PC-9 (cell line): ENCODE measurements at regions of chr12 and their contacts with region 1.

Region 1: DNA sequence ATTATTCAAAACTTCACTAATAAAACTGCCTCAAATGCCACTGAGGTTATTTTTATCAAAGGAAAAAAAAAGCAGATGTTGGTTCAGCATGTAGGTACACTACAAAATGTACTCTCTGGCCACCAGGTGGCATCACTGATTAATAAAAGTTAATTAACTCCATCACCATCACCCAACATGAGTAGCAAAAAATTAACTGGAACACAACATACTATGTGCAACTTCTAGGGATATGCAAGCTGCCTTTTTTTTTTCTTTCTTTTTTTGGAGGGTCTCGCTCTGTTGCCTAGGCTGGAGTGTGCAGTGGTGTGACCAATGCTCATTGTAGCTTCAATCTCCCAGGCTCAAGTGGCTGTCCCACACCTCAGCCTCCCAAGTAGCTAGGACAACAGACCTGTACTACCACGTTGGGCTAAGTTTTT is 43.8 kb upstream of the NR2C1 start:
- DNase-seq: peak in 1 of 2 experiments; percentile 48
- H3K4me3 ChIP-seq: peak overlapping the region; percentile 43; the same call in 1 of the 2 replicates
- H3K27ac ChIP-seq: peak overlapping the region; percentile 92
- H3K4me1 ChIP-seq: peaks cover 43% of the 10 kb centered on the region
- H3K27me3 ChIP-seq: no peaks in the 10 kb centered on the region
- CTCF ChIP-seq: peak; percentile 94

Region 2: GRCh38 chr12:95072900-95073697 is 44.1 kb before region 1 on chr12 and contains the start of gene NR2C1:
- CTCF ChIA-PET with region 1: no interaction called
- POLR2A ChIA-PET with region 1: no interaction called
- intact Hi-C with region 1: loop called (anchors 5 kb)
- DNase-seq: peak; percentile 80 to 87
- H3K4me3 ChIP-seq: peak within 1 kb of the TSS; percentile 80
- H3K27ac ChIP-seq: peak within 1 kb of the TSS; percentile 68
- H3K4me1 ChIP-seq: peaks cover 6% of the 10 kb centered on the region
- H3K27me3 ChIP-seq: no peaks in the 10 kb centered on the region
- CTCF ChIP-seq: no peak
- total RNA-seq, gene NR2C1: 24.2 and 26.4 TPM in 2 replicates

Region 3: DNA sequence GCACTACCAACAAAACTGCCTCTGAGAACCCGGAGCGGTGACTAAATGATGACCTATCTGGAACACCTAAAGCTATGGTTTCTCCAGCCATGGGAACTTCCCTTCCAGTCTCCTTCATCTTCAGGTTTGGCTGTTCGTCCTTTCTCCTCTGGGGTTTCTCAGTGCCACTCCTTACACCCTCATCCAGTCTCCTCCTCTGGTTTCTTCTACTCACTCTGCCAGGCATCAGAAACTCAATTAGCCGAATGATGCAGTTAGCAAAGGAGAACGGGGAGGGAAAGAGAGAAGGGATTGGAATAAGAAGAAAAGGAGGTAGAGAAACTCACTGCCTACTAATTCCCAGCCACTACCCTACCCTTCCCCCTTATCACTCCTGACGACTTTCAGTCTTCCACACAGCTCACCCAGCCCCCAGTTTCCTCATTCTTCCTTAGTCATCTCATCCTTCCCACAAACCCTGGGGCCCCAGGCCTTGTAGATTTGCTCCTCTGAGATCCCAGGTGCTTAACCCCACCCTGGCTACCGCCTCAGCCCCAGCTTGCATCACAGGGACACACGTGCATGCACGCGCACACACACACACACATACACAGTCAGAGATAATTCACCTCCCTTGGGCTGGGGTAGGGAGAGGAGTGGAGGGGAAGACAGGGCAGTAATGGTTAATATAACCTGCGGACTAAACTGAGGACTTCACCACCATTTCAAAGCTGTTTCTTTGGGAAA is 87.1 kb after region 1 on chr12:
- CTCF ChIA-PET with region 1: no interaction called
- POLR2A ChIA-PET with region 1: interaction called, 4 read pairs
- intact Hi-C with region 1: loop called (anchors 5 kb)
- DNase-seq: peak; percentile 91 to 98
- H3K4me3 ChIP-seq: peak overlapping the region; percentile 48
- H3K27ac ChIP-seq: peak overlapping the region; percentile 98
- H3K4me1 ChIP-seq: peaks cover 80% of the 10 kb centered on the region
- H3K27me3 ChIP-seq: no peaks in the 10 kb centered on the region
- CTCF ChIP-seq: no peak

Region 4: GRCh38 chr12:95336390-95337067 is 219.3 kb after region 1 on chr12:
- CTCF ChIA-PET with region 1: interaction called, 4 read pairs
- POLR2A ChIA-PET with region 1: no interaction called
- intact Hi-C with region 1: loop called (anchors 5 kb)
- DNase-seq: peak; percentile 26 to 61
- H3K4me3 ChIP-seq: no peak overlapping the region
- H3K27ac ChIP-seq: no peak overlapping the region
- H3K4me1 ChIP-seq: peaks cover 8% of the 10 kb centered on the region
- H3K27me3 ChIP-seq: no peaks in the 10 kb centered on the region
- CTCF ChIP-seq: peak; percentile 68

Region 5: DNA sequence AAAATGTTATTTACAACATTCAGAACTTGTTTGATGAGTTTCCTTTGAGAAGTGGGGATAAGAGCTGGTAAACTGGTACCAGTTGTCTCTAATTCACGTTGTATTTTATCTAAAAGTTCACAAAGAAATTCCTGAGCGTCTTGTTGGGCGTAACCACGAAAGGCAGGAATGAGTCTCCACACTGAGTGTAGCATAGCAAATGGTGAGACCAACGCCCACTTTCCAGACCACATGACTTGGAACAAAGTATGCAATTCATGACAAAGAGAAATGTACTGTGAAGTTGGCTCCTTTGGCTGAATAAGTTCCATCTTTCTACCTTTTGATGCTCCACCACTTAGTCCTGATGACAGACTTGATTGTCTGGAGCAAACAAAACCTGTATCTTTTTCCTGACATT is 415.7 kb after region 1 on chr12:
- CTCF ChIA-PET with region 1: interaction called, 14 read pairs
- POLR2A ChIA-PET with region 1: interaction called, 6 read pairs
- intact Hi-C with region 1: loop called (anchors 1 kb)
- DNase-seq: no peak
- H3K4me3 ChIP-seq: no peak overlapping the region
- H3K27ac ChIP-seq: no peak overlapping the region
- H3K4me1 ChIP-seq: no peaks in the 10 kb centered on the region
- H3K27me3 ChIP-seq: no peaks in the 10 kb centered on the region
- CTCF ChIP-seq: no peak